Panc1 (cell line): ENCODE measurements at regions of chr14 and their contacts with region 1.

Region 1: GRCh38 chr14:73008501-73008900 is 18.4 kb downstream of the ZFYVE1 start:
- DNase-seq: no peak
- ATAC-seq: no peak
- H3K4me3 ChIP-seq: no peak overlapping the region
- H3K27ac ChIP-seq: no peak overlapping the region
- H3K4me1 ChIP-seq: no peaks in the 10 kb centered on the region
- H3K27me3 ChIP-seq: no peaks in the 10 kb centered on the region
- CTCF ChIP-seq: no peak

Region 2: GRCh38 chr14:72781476-72782181 is 226.9 kb before region 1 on chr14:
- CTCF ChIA-PET with region 1: no interaction called
- POLR2A ChIA-PET with region 1: no interaction called
- in situ Hi-C with region 1: no loop called
- intact Hi-C with region 1: no loop called
- DNase-seq: no peak
- ATAC-seq: no peak
- H3K4me3 ChIP-seq: no peak overlapping the region
- H3K27ac ChIP-seq: no peak overlapping the region
- H3K4me1 ChIP-seq: no peaks in the 10 kb centered on the region
- H3K27me3 ChIP-seq: no peaks in the 10 kb centered on the region
- CTCF ChIP-seq: no peak

Region 3: DNA sequence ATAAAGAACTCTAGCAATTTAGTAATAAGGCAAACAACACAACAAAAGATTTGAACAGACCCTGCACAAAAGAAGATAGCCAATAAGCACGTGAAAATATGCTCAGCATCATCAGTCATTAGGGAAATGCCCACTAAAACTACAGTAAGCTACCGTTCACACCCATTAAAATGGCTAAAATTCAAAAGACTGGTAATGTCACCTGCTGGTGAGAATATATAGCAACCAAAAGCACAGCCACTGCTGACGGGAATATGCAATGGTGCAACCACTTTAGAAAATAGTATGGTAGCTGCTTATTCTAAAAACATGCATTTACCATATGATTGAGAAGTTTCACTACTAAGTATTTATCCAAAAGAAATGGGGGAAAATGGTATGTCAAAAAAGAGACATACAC is 189.5 kb before region 1 on chr14:
- CTCF ChIA-PET with region 1: no interaction called
- POLR2A ChIA-PET with region 1: no interaction called
- in situ Hi-C with region 1: no loop called
- intact Hi-C with region 1: no loop called
- DNase-seq: no peak
- ATAC-seq: no peak
- H3K4me3 ChIP-seq: no peak overlapping the region
- H3K27ac ChIP-seq: no peak overlapping the region
- H3K4me1 ChIP-seq: no peaks in the 10 kb centered on the region
- H3K27me3 ChIP-seq: no peaks in the 10 kb centered on the region
- CTCF ChIP-seq: no peak

Region 4: GRCh38 chr14:72893636-72894321 is 114.7 kb before region 1 on chr14 and contains the start of gene DPF3:
- CTCF ChIA-PET with region 1: no interaction called
- POLR2A ChIA-PET with region 1: no interaction called
- in situ Hi-C with region 1: no loop called
- intact Hi-C with region 1: no loop called
- DNase-seq: peak; percentile 60
- ATAC-seq: peak; percentile 98
- H3K4me3 ChIP-seq: peak within 1 kb of the TSS; percentile 67 to 68
- H3K27ac ChIP-seq: no peak within 1 kb of the TSS
- H3K4me1 ChIP-seq: peaks cover 7% of the 10 kb centered on the region; the same call in 1 of the 2 replicates
- H3K27me3 ChIP-seq: peaks cover 30% of the 10 kb centered on the region
- CTCF ChIP-seq: no peak
- total RNA-seq, gene DPF3: not detected

Region 5: DNA sequence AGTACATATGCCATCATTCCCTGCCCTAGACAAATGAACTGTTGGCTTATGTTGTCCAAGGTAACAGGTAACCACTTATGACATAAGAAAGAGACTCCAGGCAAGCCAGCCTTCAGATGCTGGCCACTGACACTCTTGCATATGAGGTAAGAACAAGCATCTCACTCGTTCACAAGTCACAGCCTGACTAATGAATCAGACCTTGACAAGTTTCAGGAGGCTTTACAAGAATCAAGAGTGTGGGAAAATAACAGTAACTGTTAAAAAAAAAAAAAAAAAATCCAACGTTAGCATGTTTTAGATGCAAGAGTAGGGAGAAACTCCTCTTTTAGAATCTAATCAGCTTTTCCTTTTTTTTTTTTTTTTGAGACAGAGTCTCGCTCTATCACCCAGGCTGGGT is 22.3 kb before region 1 on chr14:
- CTCF ChIA-PET with region 1: no interaction called
- POLR2A ChIA-PET with region 1: interaction called, 16 read pairs
- in situ Hi-C with region 1: no loop called
- intact Hi-C with region 1: no loop called
- DNase-seq: no peak
- ATAC-seq: no peak
- H3K4me3 ChIP-seq: no peak overlapping the region
- H3K27ac ChIP-seq: no peak overlapping the region
- H3K4me1 ChIP-seq: no peaks in the 10 kb centered on the region
- H3K27me3 ChIP-seq: no peaks in the 10 kb centered on the region
- CTCF ChIP-seq: no peak